Pancreas (tissue), 10 donors: ENCODE measurements at regions of chr10 and their contacts with region 1.

Region 1: GRCh38 chr10:124530215-124530665 is 68.6 kb downstream of the LHPP start:
- DNase-seq: peak; percentile 69 to 95 (median 85)
- ATAC-seq: peak; percentile 94 to 95 (median 95)
- H3K4me3 ChIP-seq: no peak overlapping the region
- H3K27ac ChIP-seq: no peak overlapping the region
- H3K4me1 ChIP-seq: no peaks in the 10 kb centered on the region
- H3K27me3 ChIP-seq: no peaks in the 10 kb centered on the region
- CTCF ChIP-seq: peak; percentile 72 to 82 (median 75)

Region 2: GRCh38 chr10:124827474-124827873 is 297.2 kb after region 1 on chr10:
- intact Hi-C with region 1: loop called in 1 of 3 experiments (anchors 10 kb)
- DNase-seq: no peak
- ATAC-seq: peak in 1 of 4 donors; percentile 37
- H3K4me3 ChIP-seq: no peak overlapping the region
- H3K27ac ChIP-seq: no peak overlapping the region
- H3K4me1 ChIP-seq: no peaks in the 10 kb centered on the region
- H3K27me3 ChIP-seq: no peaks in the 10 kb centered on the region
- CTCF ChIP-seq: peak; percentile 10 to 56 (median 32)